ENCODE measurements at regions of chr9 and their contacts with region 1.

Region 1: DNA sequence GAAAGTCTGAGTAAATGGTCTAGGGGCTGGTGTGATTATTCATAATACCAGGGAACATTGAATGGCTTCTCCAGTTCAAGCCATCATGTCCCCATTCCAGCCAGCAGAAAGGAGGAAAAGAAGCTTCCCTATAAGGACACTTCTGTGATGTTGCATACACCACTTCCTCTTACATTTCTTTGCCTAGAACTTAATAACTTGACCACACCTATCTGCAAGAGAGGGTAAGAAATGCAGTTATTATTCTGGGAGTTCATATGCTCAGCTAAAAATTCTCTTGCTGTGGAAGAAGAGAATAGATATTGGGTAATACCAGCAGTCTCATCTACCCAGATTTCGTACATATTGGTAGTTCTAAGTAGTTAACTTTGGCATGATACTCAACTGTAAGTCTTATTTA is 166.1 kb downstream of the SLC28A3 start:
- DNase-seq: no peak
- H3K4me3 Mint-ChIP-seq: no peak overlapping the region
- H3K27ac Mint-ChIP-seq: no peak overlapping the region
- H3K4me1 Mint-ChIP-seq: peaks cover 8% of the 10 kb centered on the region
- H3K27me3 Mint-ChIP-seq: peaks cover 3% of the 10 kb centered on the region

Region 2: DNA sequence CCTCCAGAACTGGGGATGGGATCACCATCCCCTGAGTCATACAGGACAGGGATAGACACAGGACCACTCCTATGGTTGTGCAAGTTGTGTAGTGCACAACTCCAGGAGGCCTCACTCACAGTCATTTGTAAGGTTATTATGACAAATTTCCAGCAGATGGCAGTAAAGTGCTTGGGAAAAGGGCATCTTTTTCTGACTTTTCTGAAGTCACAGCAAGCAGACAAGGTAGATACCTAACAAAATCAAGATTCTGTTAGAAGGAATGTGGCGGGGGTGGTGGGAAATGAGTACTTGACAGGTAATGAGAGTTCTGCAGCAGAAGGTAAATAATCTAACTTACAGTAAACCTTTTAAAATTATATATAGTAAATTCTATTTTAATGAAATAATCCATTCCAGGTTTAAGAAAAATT is 236.6 kb before region 1 on chr9:
- CTCF ChIA-PET with region 1: interaction called, 14 read pairs
- DNase-seq: peak; percentile 34
- H3K4me3 Mint-ChIP-seq: no peak overlapping the region
- H3K27ac Mint-ChIP-seq: no peak overlapping the region
- H3K4me1 Mint-ChIP-seq: no peaks in the 10 kb centered on the region
- H3K27me3 Mint-ChIP-seq: no peaks in the 10 kb centered on the region

Measured in activated naive CD4-positive, alpha-beta T cell treated with anti-CD3 and anti-CD28 coated beads, Interleukin-2, amount 10 ng/mL, durations not matched to agents 7 days and 5 days (primary cell).